Activated B cell treated with CpG ODN at 0.5 μM for 24 hours (primary cell): ENCODE measurements at regions of chr12 and their contacts with region 1.

Region 1: GRCh38 chr12:53295070-53295890 is at the start of gene PFDN5:
- DNase-seq: peak; percentile 75
- ATAC-seq: peak; percentile 89
- H3K4me3 Mint-ChIP-seq: peak within 1 kb of the TSS; percentile 99
- H3K27ac Mint-ChIP-seq: peak within 1 kb of the TSS; percentile 97
- H3K4me1 Mint-ChIP-seq: peaks cover 48% of the 10 kb centered on the region
- H3K27me3 Mint-ChIP-seq: no peaks in the 10 kb centered on the region
- CTCF ChIP-seq: no peak
- total RNA-seq, gene PFDN5: 486 and 578 TPM in 2 replicates

Region 2: DNA sequence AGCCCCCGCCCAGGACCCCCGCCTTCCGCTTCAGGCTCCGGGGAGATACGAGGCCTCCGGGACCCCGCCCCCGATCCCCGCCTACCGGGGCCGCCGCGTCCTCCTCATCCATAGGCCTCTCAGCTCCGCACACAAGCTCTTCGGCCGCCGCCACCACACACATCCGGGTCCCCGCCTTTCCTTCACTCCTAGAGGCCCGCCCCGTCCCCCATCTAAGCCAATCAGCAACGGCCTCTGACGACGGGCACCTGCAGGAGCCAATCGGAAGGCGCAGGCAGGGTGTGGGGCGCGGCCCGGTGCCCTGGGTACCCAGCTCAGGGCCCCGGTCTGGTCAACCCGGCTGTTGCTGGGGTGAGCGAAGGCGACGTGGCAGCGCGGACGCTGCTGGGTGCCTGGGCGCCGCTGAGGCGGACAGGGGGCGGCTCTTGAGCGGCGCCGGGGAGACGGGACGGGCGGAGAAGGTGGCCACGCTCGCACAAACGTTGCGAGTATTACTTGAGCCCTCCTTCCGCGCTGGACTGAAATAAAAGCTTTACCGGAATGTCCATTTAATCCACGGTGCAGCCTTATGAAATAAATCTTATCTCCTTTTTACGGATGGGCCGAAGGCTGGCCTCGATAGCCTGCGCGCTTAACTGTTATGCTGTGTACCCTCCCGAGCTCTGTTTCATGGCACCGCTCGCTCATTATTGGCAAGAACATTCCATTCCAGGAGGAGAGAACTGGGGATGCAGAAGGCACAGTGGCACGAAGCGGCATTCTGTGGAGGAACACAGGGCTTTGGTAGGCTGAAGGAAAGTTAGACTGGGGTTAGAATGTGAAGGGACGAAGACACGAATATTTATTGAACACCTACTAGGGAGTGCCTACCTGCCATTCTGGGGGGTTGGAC is 215.8 kb before region 1 on chr12 and contains the start of gene SPRYD3:
- CTCF ChIA-PET with region 1: no interaction called
- POLR2A ChIA-PET with region 1: interaction called, 11 read pairs
- intact Hi-C with region 1: no loop called
- DNase-seq: peak; percentile 98
- ATAC-seq: peak; percentile 98
- H3K4me3 Mint-ChIP-seq: peak within 1 kb of the TSS; percentile 92
- H3K27ac Mint-ChIP-seq: peak within 1 kb of the TSS; percentile 87
- H3K4me1 Mint-ChIP-seq: peaks cover 31% of the 10 kb centered on the region
- H3K27me3 Mint-ChIP-seq: no peaks in the 10 kb centered on the region
- CTCF ChIP-seq: no peak
- total RNA-seq, gene SPRYD3: 32.5 and 33.9 TPM in 2 replicates

Region 3: DNA sequence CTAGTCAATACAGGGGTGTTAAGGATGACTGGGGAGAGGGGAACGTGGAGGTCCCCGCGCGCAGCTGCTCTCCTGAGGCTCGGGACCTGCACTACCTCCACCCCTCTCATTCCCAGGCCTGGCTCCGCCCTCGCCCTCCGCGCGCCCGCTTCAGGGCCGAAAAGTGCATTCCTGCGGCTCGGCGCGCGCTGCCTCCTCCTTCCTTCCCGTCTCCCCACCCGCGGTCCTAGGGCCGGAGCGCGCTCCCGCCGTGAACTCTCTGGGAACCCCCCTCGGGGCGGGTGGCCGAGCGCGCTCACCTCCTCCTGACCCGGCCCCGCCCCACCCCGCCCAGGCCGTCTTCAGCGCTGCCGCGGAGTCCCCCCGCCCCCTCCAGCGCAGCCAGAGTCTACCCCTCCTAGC is 74.5 kb before region 1 on chr12:
- CTCF ChIA-PET with region 1: interaction called, 298 read pairs
- POLR2A ChIA-PET with region 1: interaction called, 33 read pairs
- intact Hi-C with region 1: loop called (anchors 1 kb)
- DNase-seq: peak; percentile 74
- ATAC-seq: peak; percentile 77
- H3K4me3 Mint-ChIP-seq: peak overlapping the region; percentile 89
- H3K27ac Mint-ChIP-seq: peak overlapping the region; percentile 96
- H3K4me1 Mint-ChIP-seq: peaks cover 48% of the 10 kb centered on the region
- H3K27me3 Mint-ChIP-seq: no peaks in the 10 kb centered on the region
- CTCF ChIP-seq: no peak

Region 4: DNA sequence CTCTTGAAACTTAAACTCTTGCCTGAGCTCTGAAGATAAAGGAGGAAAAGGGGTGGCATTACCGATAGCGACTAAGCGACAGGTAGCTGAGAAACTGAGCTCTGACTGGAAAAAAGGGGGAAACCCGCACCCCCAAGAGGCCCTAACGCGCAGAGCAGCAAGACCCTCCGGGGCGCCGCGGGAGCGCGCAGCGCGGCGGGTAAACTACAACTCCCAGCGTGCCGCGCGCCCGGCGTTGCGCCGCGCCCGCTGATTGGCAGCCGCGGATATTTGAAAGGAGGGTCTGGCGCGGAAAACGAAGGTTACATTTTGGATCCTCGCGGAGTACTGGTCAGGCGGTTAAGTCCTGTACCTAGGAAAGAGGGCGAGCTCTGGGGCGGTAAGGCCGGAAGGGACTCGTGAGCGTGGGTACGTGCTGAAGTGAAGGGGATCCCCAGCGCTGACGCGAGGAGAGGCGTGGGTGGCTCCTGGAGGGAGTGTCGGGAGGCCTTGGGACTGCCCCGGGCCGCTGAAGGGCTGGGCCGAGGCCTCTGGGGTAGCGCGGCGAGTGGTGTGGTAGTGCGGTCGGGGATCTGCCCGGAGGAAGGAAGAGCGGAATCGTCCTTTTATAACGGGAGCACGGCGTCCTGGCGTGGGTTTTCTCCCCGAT is 27.2 kb before region 1 on chr12 and contains the start of gene ESPL1:
- CTCF ChIA-PET with region 1: interaction called, 8 read pairs
- POLR2A ChIA-PET with region 1: interaction called, 17 read pairs
- intact Hi-C with region 1: loop called (anchors 1 kb)
- DNase-seq: peak; percentile 84
- ATAC-seq: peak; percentile 94
- H3K4me3 Mint-ChIP-seq: peak within 1 kb of the TSS; percentile 98
- H3K27ac Mint-ChIP-seq: peak within 1 kb of the TSS; percentile 91
- H3K4me1 Mint-ChIP-seq: peaks cover 21% of the 10 kb centered on the region
- H3K27me3 Mint-ChIP-seq: no peaks in the 10 kb centered on the region
- CTCF ChIP-seq: no peak
- total RNA-seq, gene ESPL1: 6.2 and 8.2 TPM in 2 replicates

Region 5: DNA sequence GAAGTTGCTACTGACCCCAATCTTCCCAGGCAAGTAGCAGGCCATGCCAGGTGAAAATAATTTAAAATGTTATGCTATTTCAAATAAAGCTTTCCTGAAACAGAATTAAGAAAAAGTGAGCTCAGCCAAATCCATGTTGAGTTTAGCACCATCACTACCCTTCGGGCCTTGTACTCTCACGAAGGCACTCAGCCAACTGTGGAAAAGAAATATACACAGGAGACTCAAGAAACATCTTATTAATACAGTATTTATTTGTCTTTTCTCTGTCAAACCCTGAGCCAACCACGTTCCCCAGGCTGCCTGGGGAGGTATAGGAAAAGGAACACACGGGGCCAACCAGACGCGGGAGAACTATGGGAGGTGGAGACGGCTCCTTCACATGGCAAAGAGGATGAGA is 369.7 kb after region 1 on chr12:
- CTCF ChIA-PET with region 1: no interaction called
- POLR2A ChIA-PET with region 1: no interaction called
- intact Hi-C with region 1: no loop called
- DNase-seq: no peak
- ATAC-seq: no peak
- H3K4me3 Mint-ChIP-seq: no peak overlapping the region
- H3K27ac Mint-ChIP-seq: no peak overlapping the region
- H3K4me1 Mint-ChIP-seq: no peaks in the 10 kb centered on the region
- H3K27me3 Mint-ChIP-seq: no peaks in the 10 kb centered on the region
- CTCF ChIP-seq: no peak